Testis (tissue), 5 donors: ENCODE measurements at regions of chr12 and their contacts with region 1.

Region 1: GRCh38 chr12:132414634-132415326 is 75.2 kb upstream of the FBRSL1 start:
- DNase-seq: peak; percentile 80
- H3K4me3 ChIP-seq: no peak overlapping the region
- H3K27ac ChIP-seq: no peak overlapping the region
- H3K4me1 ChIP-seq: peaks cover 5% of the 10 kb centered on the region
- H3K27me3 ChIP-seq: no peaks in the 10 kb centered on the region
- CTCF ChIP-seq: peak; percentile 78 to 87 (median 82)
- POLR2A ChIP-seq: no peak

Region 2: DNA sequence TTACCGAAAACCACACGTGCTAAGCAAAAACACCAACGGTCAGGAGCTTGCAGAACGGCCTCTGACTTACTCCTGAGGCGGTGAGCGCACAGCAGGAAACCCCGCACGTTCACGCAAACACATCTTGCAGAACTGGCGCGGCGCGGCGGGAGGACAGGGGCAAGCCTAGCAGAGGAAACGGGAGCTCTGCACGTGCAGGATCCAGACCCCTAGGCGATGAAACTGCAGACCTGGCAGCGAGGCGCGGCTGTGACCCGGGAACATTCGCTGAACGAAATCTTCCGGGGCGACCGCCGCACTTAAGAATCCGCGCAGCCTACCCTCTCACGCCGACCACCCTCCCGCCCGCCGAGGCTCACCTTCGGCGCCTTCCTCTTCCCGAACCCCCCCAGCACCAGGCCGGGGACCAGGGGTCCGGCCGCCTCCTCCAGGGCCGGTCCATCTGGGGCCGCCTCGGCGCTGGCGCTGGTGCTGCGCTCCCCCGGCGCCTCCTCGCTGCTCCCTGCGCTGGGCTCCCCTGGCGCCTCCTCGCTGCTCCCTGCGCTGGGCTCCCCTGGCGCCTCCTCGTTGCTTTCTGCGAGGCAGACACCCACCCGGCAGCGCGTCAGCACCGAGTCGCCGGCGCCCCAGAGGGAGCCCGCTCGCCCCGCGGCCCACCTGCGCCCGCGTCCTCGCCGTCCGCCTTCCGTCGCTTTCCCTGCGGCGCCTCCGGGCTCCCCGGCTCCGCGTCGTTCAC is 271.3 kb before region 1 on chr12:
- intact Hi-C with region 1: no loop called
- DNase-seq: no peak
- H3K4me3 ChIP-seq: peak overlapping the region; percentile 68 to 97
- H3K27ac ChIP-seq: no peak overlapping the region
- H3K4me1 ChIP-seq: peaks cover 17% of the 10 kb centered on the region
- H3K27me3 ChIP-seq: no peaks in the 10 kb centered on the region
- CTCF ChIP-seq: no peak
- POLR2A ChIP-seq: no peak

Region 3: DNA sequence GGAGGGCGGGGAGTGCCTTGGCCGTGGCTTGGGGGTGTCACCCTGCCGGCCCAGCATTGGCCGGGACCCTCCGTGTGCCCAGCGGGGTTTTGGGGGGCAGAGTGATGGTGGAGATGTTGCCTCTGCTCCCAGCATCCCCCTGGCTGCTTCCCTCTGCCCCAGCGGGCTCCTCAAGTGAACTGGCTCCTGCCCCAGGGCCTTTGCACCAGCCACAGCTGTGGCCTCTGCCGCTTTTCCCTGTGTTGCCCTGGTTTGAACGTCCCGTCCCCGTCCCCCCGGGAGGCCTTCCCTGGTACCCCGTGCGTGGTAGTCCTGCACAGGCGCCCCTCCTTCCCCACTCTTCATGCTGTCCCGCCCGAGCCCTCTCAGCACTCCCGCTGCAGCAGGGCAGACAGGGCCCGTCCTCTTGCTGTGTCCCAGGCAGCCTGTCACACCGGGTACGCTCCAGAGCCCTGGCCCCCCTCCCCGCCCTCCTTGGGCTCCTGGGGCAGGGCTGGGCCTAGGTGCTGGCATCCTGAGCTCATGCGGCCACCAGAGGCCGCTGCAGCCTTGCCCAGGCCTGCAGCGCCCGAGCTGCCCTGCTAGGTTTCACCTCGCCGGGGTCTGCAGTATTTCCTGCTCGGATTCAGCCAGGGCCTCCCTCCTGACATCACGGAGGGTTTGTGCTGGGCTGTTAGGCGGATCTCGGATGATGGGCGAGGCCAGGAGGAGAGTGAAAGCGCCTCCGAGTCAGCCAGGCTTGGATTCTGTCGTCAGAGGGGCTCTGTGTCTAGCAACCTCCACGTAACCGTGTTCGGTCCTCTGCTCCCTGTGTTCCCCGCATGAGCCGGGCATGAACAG is 261.1 kb before region 1 on chr12:
- intact Hi-C with region 1: loop called (anchors 10 kb)
- DNase-seq: peak; percentile 69
- H3K4me3 ChIP-seq: no peak overlapping the region
- H3K27ac ChIP-seq: no peak overlapping the region
- H3K4me1 ChIP-seq: no peaks in the 10 kb centered on the region
- H3K27me3 ChIP-seq: no peaks in the 10 kb centered on the region
- CTCF ChIP-seq: peak; percentile 71 to 80 (median 74)
- POLR2A ChIP-seq: no peak

Region 4: GRCh38 chr12:132523576-132524331 is 109.0 kb after region 1 on chr12:
- intact Hi-C with region 1: loop called (anchors 10 kb)
- DNase-seq: peak; percentile 82
- H3K4me3 ChIP-seq: no peak overlapping the region
- H3K27ac ChIP-seq: no peak overlapping the region
- H3K4me1 ChIP-seq: peaks cover 40% of the 10 kb centered on the region
- H3K27me3 ChIP-seq: no peaks in the 10 kb centered on the region
- CTCF ChIP-seq: peak; percentile 66 to 83 (median 79)
- POLR2A ChIP-seq: no peak

Region 5: DNA sequence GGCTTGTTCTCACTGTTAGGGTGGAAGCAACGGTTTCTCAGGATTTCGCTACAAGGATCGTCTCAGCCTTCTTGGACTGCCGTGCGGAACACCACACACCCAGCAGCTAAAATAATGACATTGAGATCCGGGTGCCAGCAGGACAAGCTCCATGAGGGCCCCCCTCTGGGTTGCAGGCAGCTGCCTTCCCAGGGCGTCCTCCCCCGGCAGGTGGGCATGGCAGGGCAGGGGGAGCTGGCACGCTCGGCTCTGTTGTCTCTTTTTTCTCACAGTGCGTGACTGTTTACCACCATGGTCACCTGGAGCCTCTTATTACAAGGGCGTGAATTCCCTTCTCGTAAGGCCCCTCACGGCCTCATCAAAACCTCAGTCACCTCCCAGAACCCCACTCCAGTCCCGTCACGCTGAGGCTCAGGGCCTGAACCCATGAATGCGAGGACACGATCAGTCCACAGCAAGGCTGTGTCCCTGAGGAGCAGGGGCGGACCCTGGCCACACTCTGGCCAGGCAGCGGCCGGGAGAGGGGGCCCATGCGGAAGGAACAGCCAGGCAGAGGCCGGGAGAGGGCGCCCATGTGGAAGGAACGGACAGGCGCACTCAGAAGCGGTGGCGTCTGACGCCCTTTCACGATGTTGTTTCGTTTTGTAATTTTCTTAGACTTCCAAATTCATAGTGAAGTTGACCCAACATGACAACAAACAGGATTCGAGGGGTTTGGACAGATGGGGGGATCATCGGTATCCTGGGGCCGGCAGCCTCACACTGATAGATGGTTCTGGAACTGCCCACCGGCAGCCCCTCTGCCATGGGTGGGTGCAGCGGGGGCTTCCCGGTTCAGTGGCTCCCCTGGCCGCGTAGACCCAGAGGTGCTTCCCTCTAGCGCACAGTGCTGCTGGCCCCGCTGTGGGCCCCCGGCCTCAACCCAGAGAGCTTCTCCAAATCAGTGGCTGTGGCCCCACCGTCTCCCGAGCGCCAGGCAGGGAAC is 185.6 kb after region 1 on chr12:
- intact Hi-C with region 1: loop called (anchors 10 kb)
- DNase-seq: peak; percentile 79
- H3K4me3 ChIP-seq: peak overlapping the region in 1 of 2 donors; percentile 25
- H3K27ac ChIP-seq: peak overlapping the region in 1 of 2 donors; percentile 25
- H3K4me1 ChIP-seq: no peaks in the 10 kb centered on the region
- H3K27me3 ChIP-seq: no peaks in the 10 kb centered on the region
- CTCF ChIP-seq: peak in 2 of 3 experiments; percentile 43 to 55
- POLR2A ChIP-seq: no peak